HEK293T (cell line): ENCODE measurements at regions of chr9 and their contacts with region 1.

Region 1: GRCh38 chr9:79489247-79489985 is 82.3 kb upstream of the TLE4 start:
- DNase-seq: no peak

Region 2: GRCh38 chr9:79477955-79478771 is 11.3 kb before region 1 on chr9:
- CTCF ChIA-PET with region 1: interaction called, 10 read pairs
- POLR2A ChIA-PET with region 1: interaction called, 3 read pairs
- DNase-seq: peak; percentile 89